HAP-1 (cell line): ENCODE measurements at regions of chr1 and their contacts with region 1.

Region 1: DNA sequence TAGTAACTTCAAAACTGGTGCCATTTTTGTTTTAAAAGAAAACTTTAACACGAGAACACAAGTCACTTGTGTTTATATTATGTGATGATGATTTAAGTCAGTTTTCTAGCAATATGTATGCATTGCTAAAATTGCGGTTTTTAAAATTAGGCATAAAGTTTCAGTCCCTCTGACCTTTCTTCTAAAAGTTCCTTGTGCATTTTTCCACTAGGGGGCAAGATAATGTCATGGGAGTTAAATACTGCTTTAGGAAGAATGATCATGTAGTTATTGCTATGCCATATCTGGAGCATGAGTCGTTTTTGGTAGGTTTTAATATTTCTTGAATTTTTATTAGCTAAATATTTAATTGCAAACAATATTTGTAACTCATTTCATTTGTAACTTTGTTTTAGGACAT is 10.7 kb downstream of the CDC7 start:
- DNase-seq: peak in 1 of 2 experiments; percentile 22
- H3K4me3 ChIP-seq: no peak overlapping the region
- H3K4me1 ChIP-seq: no peaks in the 10 kb centered on the region
- H3K27me3 ChIP-seq: no peaks in the 10 kb centered on the region

Region 2: DNA sequence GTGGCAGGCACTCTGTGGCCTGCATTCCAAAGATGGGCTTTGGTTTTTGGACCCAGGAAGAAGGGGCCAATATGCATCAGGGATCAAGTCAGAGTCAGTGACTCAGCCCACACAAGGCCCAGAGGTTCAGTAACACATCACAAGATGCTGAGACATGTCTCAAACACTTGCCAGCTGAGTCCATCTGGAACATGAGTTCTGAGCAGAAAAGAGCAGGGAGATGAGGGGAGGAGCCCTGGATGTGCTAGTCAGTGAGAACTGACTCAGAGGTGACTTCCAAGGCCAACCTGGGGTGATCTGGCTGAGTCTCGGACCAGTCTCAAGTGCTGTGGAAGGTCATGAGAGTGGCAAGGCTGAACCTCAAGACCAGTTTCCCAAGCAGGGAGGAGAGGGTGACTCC is 139.4 kb after region 1 on chr1:
- in situ Hi-C with region 1: no loop called
- DNase-seq: no peak
- H3K4me3 ChIP-seq: no peak overlapping the region
- H3K4me1 ChIP-seq: no peaks in the 10 kb centered on the region
- H3K27me3 ChIP-seq: no peaks in the 10 kb centered on the region

Region 3: DNA sequence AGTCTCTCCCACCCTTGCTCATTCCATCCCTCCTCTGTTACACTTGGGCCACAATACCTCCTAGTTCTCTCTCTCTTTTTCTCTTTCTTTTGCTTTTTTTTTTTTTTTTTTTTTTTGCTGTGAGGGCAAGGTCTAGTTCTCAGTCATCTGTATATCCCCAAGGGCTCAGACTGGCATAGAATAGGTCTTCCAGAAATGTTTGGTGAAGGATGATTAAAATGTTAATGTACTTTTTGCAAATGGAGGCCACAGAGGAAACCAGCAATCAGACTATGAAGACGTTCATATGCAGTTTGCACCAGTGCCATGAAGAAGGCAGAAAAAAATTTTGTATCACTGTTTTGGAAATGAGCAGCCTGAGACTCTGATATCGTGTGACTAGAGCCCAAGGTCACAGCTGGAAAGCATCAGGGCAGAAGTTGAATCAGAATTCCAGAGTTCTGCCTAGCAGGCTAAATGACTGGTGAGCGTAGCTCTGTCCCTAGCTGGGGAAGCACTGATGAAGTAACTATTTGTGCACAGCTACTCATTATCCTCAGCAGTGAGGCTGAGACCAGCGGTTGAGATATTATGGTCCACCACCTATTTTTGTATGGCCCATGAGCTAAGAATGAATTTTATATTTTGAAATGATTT is 188.1 kb after region 1 on chr1:
- in situ Hi-C with region 1: no loop called
- DNase-seq: no peak
- H3K4me3 ChIP-seq: no peak overlapping the region
- H3K4me1 ChIP-seq: no peaks in the 10 kb centered on the region
- H3K27me3 ChIP-seq: no peaks in the 10 kb centered on the region

Region 4: GRCh38 chr1:91924146-91924545 is 412.8 kb after region 1 on chr1:
- in situ Hi-C with region 1: loop called (anchors 5 kb)
- DNase-seq: no peak
- H3K4me3 ChIP-seq: no peak overlapping the region
- H3K4me1 ChIP-seq: peaks cover 2% of the 10 kb centered on the region; the same call in 1 of the 2 replicates
- H3K27me3 ChIP-seq: no peaks in the 10 kb centered on the region